CD4-positive, alpha-beta T cell (primary cell): ENCODE measurements at regions of chr2 and their contacts with region 1.

Region 1: DNA sequence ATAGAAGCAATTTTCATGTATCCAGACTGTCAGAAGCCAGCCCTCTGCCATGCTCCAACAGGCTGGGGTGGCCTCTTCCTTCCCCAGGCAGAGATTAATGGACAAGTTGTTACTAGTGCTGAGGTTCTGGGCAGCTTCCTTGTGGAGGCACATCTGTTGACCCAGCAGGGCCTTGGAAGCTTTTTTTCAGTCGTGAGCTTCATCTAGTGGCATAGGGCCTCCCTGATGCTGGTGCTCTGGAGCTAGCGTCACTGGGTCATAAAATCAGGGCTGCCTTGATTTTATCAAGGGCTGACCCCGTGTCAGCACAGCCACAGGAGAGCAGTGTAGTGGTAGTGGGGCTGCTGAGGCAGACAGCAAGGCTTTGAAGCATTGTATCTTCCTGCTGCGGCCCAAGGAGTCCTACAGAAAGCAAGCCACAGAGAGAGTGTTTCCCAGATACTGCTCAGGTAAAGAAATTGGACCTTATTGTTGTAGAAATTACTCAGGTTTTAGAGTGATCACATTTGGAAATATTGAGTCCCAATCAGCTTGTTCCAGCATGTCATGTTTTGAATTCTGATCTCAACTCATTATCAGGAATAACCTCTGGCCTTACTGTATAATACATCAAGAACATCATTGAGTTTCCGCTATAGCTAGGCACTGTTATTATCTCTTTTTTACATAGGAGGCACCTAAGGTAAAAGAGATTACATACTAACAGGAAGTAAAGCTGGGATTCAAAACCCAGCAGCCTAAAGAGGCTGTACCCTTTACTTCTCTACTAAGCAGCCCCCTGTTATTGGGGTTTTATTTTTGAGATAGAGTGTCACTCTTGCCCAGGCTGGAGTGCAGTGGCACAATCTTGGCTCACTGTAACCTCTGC is 92.3 kb upstream of the ALPP start:
- DNase-seq: no peak
- ATAC-seq: peak; percentile 62
- H3K4me3 ChIP-seq: no peak overlapping the region
- H3K4me3 Mint-ChIP-seq: no peak overlapping the region
- H3K27ac ChIP-seq: peak overlapping the region; percentile 5 to 17
- H3K27ac Mint-ChIP-seq: peak overlapping the region; percentile 72
- H3K4me1 ChIP-seq: peaks cover 5% of the 10 kb centered on the region
- H3K4me1 Mint-ChIP-seq: peaks cover 52% of the 10 kb centered on the region
- H3K27me3 ChIP-seq: no peaks in the 10 kb centered on the region
- H3K27me3 Mint-ChIP-seq: no peaks in the 10 kb centered on the region
- CTCF ChIP-seq: no peak

Region 2: DNA sequence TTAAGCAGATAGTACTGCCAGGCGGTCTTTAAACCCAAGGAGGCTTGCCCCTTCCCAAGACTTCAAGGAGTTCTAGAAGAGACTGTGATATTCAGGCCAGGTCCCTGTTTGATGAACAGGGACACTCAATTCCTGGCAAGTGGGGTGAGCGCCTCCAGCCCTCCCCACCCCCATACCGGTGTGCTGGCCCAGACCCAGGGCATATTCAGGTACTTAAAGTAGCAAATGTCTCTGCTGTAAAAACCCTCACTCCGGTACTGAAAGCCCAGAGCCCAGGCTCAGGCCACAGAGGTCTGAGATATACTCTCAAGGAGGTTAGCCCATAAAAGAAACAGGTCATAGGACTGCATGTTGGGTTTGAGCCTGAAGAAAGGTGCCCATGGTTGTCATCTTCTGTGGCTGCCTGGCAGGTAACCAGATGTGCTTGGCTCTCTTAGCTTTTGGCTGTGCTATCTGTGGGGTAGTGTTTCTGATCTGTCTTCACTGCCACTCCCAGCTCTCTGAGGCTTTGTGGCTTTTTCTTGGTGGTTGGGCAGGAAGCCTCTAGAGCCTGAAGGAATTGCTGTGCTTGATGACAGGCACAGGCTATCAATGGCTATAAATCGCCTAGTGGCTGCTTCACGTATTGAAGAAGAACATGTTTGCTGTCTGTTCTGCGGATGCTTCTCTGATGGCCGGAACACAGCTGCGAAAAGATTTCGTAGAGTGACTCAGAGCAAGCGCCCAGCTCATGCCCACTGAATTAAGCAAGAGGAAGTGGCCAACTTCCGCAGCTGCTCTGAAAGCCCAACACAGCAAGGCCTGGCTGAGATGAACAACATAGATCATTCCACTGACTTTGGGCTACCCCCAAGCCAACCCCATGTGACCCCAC is 29.1 kb after region 1 on chr2:
- CTCF ChIA-PET with region 1: no interaction called
- POLR2A ChIA-PET with region 1: interaction called, 19 read pairs
- intact Hi-C with region 1: loop called in 1 of 2 experiments (anchors 5 kb)
- DNase-seq: peak; percentile 44 to 92 (median 67)
- ATAC-seq: peak; percentile 87
- H3K4me3 ChIP-seq: peak overlapping the region; percentile 19
- H3K4me3 Mint-ChIP-seq: peak overlapping the region; percentile 80
- H3K27ac ChIP-seq: peak overlapping the region; percentile 62
- H3K27ac Mint-ChIP-seq: peak overlapping the region; percentile 90
- H3K4me1 ChIP-seq: peaks cover 80% of the 10 kb centered on the region
- H3K4me1 Mint-ChIP-seq: peaks cover 92% of the 10 kb centered on the region
- H3K27me3 ChIP-seq: no peaks in the 10 kb centered on the region
- H3K27me3 Mint-ChIP-seq: no peaks in the 10 kb centered on the region
- CTCF ChIP-seq: peak; percentile 47

Region 3: DNA sequence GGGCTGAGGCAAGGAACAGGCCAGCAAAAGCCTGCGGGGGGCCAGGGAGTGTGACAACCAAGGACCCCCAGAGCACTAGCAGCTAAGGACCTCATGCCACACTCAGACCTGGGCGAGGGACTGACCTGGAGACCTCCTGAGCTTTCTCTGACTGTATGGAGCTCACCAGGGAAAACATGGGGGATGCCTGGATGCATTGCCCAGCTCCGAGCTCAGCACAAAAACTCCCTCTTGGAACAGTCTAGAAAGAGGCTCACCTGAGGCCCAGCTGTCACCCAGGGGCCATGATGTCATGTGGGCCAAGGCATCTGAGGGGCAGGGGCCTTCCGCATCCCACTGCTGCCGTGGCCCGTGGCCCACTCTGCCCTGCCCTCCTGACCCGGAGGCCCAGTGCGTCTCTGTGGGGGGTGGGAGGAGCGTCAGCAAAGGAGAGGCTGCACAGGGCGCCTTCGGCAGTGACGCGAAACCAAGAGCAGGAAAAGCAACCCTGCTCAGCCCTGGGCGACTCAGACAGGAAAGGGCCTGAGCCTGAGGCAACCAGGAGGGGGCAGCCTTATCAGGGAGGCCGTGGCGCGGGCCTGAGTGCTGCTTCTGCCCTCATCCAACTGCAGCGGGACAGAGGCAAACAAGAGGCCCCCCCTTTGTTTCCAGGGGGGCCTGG is 35.1 kb after region 1 on chr2:
- CTCF ChIA-PET with region 1: no interaction called
- POLR2A ChIA-PET with region 1: interaction called, 19 read pairs
- intact Hi-C with region 1: loop called in 1 of 2 experiments (anchors 5 kb)
- DNase-seq: peak in 13 of 14 experiments; percentile 25 to 76 (median 49)
- ATAC-seq: peak; percentile 75
- H3K4me3 ChIP-seq: no peak overlapping the region
- H3K4me3 Mint-ChIP-seq: no peak overlapping the region
- H3K27ac ChIP-seq: peak overlapping the region; percentile 21 to 76
- H3K27ac Mint-ChIP-seq: peak overlapping the region; percentile 90
- H3K4me1 ChIP-seq: peaks cover 75% of the 10 kb centered on the region
- H3K4me1 Mint-ChIP-seq: peaks cover 75% of the 10 kb centered on the region
- H3K27me3 ChIP-seq: no peaks in the 10 kb centered on the region
- H3K27me3 Mint-ChIP-seq: no peaks in the 10 kb centered on the region
- CTCF ChIP-seq: peak; percentile 58

Region 4: GRCh38 chr2:232421189-232421785 is 135.1 kb after region 1 on chr2:
- CTCF ChIA-PET with region 1: no interaction called
- POLR2A ChIA-PET with region 1: no interaction called
- intact Hi-C with region 1: no loop called
- DNase-seq: no peak
- ATAC-seq: no peak
- H3K4me3 ChIP-seq: peak overlapping the region; percentile 29
- H3K4me3 Mint-ChIP-seq: no peak overlapping the region
- H3K27ac ChIP-seq: no peak overlapping the region
- H3K27ac Mint-ChIP-seq: no peak overlapping the region
- H3K4me1 ChIP-seq: peaks cover 23% of the 10 kb centered on the region
- H3K4me1 Mint-ChIP-seq: peaks cover 10% of the 10 kb centered on the region
- H3K27me3 ChIP-seq: peaks cover 42 to 50% of the 10 kb centered on the region in 2 experiments
- H3K27me3 Mint-ChIP-seq: peaks cover 52% of the 10 kb centered on the region
- CTCF ChIP-seq: no peak